ENCODE measurements at regions of chr6 and their contacts with region 1.

Region 1: DNA sequence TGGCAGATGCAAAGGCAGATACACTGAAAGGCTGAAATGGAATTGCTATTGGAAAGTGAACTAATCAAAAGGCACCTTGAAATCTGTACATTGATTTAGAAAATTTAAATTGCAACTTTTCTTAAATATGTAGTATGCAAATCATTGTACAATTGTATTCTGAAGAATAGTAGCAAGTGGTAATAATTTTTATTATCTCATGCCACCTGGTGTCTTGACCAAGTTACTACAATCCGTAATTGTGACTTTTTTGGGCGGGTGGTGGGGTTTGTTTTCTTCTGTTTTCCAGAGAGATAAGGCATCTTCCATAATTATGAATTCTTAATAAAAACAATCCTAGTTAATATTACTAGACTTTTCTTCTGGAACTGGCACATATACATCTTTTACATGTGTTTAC is 12.5 kb upstream of the BCKDHB start:
- DNase-seq: peak; percentile 36
- H3K4me3 Mint-ChIP-seq: no peak overlapping the region
- H3K27ac Mint-ChIP-seq: no peak overlapping the region
- H3K4me1 Mint-ChIP-seq: no peaks in the 10 kb centered on the region
- H3K27me3 Mint-ChIP-seq: peaks cover 10% of the 10 kb centered on the region
- CTCF ChIP-seq: peak; percentile 55

Region 2: DNA sequence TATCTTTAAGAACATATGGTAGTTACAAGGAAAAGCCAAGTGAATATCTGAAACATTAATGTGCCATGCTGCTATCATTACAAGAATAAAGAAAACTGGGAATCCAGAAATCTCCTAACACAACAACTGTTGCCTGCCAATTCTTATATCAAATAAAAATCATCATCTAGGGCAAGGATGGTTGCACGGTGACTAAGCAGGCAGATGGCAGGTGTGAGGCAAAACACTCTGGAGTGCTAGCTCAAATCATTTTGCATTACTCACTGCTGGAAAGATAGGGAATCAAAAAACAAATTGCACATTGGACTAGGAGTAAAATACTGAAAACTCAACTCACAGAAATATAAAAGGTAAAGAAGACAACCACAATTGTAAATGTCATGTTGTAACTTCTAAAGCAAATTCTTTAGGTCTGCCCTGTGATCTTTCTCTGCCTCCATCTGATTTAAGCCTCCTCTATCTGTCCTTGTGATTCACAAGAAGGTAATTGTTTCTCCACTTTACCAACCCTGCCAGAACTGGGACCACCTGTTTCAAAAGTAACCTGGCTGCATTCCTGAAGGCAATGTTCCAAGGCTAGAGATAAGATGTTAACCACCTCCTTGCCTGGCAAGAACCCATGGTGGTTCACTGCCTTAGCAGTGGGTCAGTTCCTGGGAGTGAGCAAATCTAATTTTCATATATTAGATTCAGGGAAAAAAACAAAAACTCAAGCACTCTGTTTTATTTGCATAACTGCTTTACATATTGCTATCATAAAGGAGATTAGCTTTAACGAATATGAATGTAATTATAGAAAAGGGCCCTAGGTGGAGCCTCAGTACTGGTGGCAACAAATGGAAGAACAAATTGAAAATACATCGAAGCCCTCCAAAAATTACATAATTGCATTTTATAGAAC is 523.6 kb before region 1 on chr6:
- CTCF ChIA-PET with region 1: interaction called, 3 read pairs
- POLR2A ChIA-PET with region 1: no interaction called
- intact Hi-C with region 1: loop called (anchors 10 kb)
- DNase-seq: peak; percentile 54
- H3K4me3 Mint-ChIP-seq: no peak overlapping the region
- H3K27ac Mint-ChIP-seq: peak overlapping the region; percentile 63
- H3K4me1 Mint-ChIP-seq: peaks cover 18% of the 10 kb centered on the region
- H3K27me3 Mint-ChIP-seq: no peaks in the 10 kb centered on the region
- CTCF ChIP-seq: peak; percentile 68

Region 3: GRCh38 chr6:79777713-79778579 is 316.1 kb before region 1 on chr6:
- CTCF ChIA-PET with region 1: interaction called, 6 read pairs
- POLR2A ChIA-PET with region 1: no interaction called
- intact Hi-C with region 1: loop called (anchors 1 kb)
- DNase-seq: peak; percentile 81
- H3K4me3 Mint-ChIP-seq: peak overlapping the region; percentile 63
- H3K27ac Mint-ChIP-seq: no peak overlapping the region
- H3K4me1 Mint-ChIP-seq: no peaks in the 10 kb centered on the region
- H3K27me3 Mint-ChIP-seq: no peaks in the 10 kb centered on the region
- CTCF ChIP-seq: peak; percentile 96

Region 4: GRCh38 chr6:79949233-79949632 is 144.8 kb before region 1 on chr6:
- CTCF ChIA-PET with region 1: interaction called, 23 read pairs
- POLR2A ChIA-PET with region 1: interaction called, 4 read pairs
- intact Hi-C with region 1: loop called (anchors 1 kb)
- DNase-seq: peak; percentile 79
- H3K4me3 Mint-ChIP-seq: no peak overlapping the region
- H3K27ac Mint-ChIP-seq: no peak overlapping the region
- H3K4me1 Mint-ChIP-seq: peaks cover 14% of the 10 kb centered on the region
- H3K27me3 Mint-ChIP-seq: no peaks in the 10 kb centered on the region
- CTCF ChIP-seq: peak; percentile 51

Region 5: DNA sequence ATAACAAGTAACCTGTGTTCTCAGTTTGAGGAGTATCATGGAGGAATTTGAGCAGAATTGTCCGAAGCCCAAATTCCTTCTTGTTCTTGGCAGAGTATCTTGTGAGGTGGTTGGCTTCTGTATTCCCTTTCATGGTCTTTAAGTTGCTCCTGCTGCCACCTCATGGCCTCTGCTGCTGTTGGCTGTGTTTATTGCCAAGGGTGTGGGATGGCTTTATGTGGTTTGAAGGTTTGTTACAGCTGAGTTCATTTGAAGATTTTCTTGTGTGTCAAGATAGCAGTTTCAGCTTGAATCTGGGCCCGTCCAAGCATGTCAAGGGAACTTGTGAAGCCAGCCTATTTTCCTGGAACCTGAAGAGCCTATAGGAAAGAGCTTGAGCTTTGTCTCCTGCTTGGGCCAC is 109.8 kb before region 1 on chr6:
- CTCF ChIA-PET with region 1: interaction called, 11 read pairs
- POLR2A ChIA-PET with region 1: no interaction called
- intact Hi-C with region 1: no loop called
- DNase-seq: peak; percentile 26
- H3K4me3 Mint-ChIP-seq: no peak overlapping the region
- H3K27ac Mint-ChIP-seq: no peak overlapping the region
- H3K4me1 Mint-ChIP-seq: no peaks in the 10 kb centered on the region
- H3K27me3 Mint-ChIP-seq: no peaks in the 10 kb centered on the region
- CTCF ChIP-seq: no peak

Region 6: DNA sequence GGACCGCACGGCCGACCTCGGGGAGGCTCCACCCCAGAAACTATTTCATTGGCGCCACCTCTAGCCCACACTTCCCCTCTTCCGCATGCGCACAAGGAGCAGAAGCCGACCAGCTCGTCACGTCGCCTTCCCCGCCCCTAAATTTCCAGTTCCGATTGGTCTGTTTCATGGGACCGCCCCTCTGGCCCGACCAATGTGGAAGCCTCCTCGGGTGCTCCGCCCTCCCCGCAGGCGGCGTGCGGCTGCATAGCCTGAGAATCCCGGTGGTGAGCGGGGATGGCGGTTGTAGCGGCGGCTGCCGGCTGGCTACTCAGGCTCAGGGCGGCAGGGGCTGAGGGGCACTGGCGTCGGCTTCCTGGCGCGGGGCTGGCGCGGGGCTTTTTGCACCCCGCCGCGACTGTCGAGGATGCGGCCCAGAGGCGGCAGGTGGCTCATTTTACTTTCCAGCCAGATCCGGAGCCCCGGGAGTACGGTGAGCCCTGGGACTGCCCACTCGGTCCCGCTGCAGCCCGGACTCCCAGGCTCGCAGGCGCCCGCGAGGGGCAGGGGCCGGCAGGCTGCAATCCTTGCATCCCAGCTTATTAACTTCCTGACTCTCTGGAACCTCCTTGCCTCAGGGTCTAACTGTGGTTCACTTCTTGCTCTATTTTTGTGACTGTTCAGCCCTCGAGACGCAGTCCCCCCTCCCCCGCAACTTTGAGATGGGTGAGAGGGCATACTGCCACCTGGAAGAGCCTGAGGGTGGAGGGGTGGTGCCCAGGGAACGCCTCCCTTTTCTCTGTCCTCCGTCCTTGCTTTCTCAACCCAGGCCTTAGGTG is 12.6 kb after region 1 on chr6 and contains the start of gene BCKDHB:
- CTCF ChIA-PET with region 1: interaction called, 19 read pairs
- POLR2A ChIA-PET with region 1: interaction called, 5 read pairs
- intact Hi-C with region 1: no loop called
- DNase-seq: peak; percentile 100
- H3K4me3 Mint-ChIP-seq: peak within 1 kb of the TSS; percentile 96
- H3K27ac Mint-ChIP-seq: peak within 1 kb of the TSS; percentile 16
- H3K4me1 Mint-ChIP-seq: peaks cover 10% of the 10 kb centered on the region
- H3K27me3 Mint-ChIP-seq: peaks cover 11% of the 10 kb centered on the region
- CTCF ChIP-seq: no peak
- total RNA-seq, gene BCKDHB: 14.5 and 17.7 TPM in 2 replicates

Region 7: GRCh38 chr6:80793411-80793810 is 699.4 kb after region 1 on chr6:
- CTCF ChIA-PET with region 1: no interaction called
- POLR2A ChIA-PET with region 1: no interaction called
- intact Hi-C with region 1: no loop called
- DNase-seq: no peak
- H3K4me3 Mint-ChIP-seq: no peak overlapping the region
- H3K27ac Mint-ChIP-seq: no peak overlapping the region
- H3K4me1 Mint-ChIP-seq: peaks cover 8% of the 10 kb centered on the region
- H3K27me3 Mint-ChIP-seq: no peaks in the 10 kb centered on the region
- CTCF ChIP-seq: no peak

Measured in MCF 10A (cell line).